ENCODE measurements at regions of chr9 and their contacts with region 1.

Region 1: DNA sequence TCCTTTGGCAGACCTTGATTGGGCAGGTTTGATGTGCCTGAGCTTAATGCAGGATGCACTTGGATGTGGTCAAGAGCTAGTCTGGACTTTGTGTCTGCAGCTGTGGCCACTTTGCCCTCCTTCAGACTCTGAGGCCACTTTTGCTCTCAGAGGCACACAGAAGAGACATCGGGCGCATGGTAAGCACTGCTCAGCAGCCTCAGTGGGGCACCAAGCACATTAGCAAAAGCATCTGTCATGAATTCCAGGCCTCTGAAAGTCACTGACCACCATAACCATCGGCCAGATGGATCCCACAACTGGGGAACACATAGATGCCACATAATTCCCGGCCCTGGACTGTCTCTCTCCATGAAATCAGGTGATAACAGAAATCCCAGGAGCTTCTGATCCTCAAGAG is 34.3 kb upstream of the ZNF782 start:
- DNase-seq: no peak
- ATAC-seq: no peak
- H3K4me3 ChIP-seq: no peak overlapping the region
- H3K4me3 Mint-ChIP-seq: no peak overlapping the region
- H3K27ac ChIP-seq: no peak overlapping the region
- H3K27ac Mint-ChIP-seq: no peak overlapping the region
- H3K4me1 ChIP-seq: no peaks in the 10 kb centered on the region
- H3K4me1 Mint-ChIP-seq: no peaks in the 10 kb centered on the region
- H3K27me3 ChIP-seq: no peaks in the 10 kb centered on the region
- H3K27me3 Mint-ChIP-seq: no peaks in the 10 kb centered on the region
- CTCF ChIP-seq: no peak

Region 2: GRCh38 chr9:96751815-96752214 is 136.8 kb before region 1 on chr9:
- CTCF ChIA-PET with region 1: no interaction called
- POLR2A ChIA-PET with region 1: no interaction called
- intact Hi-C with region 1: no loop called
- DNase-seq: no peak
- ATAC-seq: no peak
- H3K4me3 ChIP-seq: no peak overlapping the region
- H3K4me3 Mint-ChIP-seq: no peak overlapping the region
- H3K27ac ChIP-seq: no peak overlapping the region
- H3K27ac Mint-ChIP-seq: no peak overlapping the region
- H3K4me1 ChIP-seq: no peaks in the 10 kb centered on the region
- H3K4me1 Mint-ChIP-seq: no peaks in the 10 kb centered on the region
- H3K27me3 ChIP-seq: no peaks in the 10 kb centered on the region
- H3K27me3 Mint-ChIP-seq: no peaks in the 10 kb centered on the region
- CTCF ChIP-seq: no peak

Region 3: DNA sequence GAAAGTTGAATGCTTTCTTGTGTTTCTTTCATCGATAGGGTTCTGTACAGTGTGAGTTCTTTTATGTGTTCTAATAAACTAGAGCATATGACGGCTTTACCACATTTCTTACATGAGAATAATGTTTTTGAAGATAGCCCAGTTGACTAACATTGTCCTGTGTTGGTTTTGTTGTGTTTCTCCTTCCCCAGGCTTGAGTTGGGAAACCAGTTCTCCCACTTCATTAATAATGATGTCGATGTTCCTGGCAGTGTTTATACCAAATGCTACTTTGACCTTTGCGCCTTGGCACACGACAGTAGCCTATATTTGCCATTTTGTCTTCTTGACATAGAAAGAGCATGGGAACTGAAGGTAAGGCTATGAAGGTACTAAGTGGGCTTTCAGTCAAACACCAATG is 19.9 kb before region 1 on chr9:
- CTCF ChIA-PET with region 1: no interaction called
- POLR2A ChIA-PET with region 1: interaction called, 4 read pairs
- intact Hi-C with region 1: loop called in 1 of 2 experiments (anchors 2 kb)
- DNase-seq: no peak
- ATAC-seq: no peak
- H3K4me3 ChIP-seq: no peak overlapping the region
- H3K4me3 Mint-ChIP-seq: no peak overlapping the region
- H3K27ac ChIP-seq: no peak overlapping the region
- H3K27ac Mint-ChIP-seq: no peak overlapping the region
- H3K4me1 ChIP-seq: no peaks in the 10 kb centered on the region
- H3K4me1 Mint-ChIP-seq: peaks cover 1% of the 10 kb centered on the region
- H3K27me3 ChIP-seq: no peaks in the 10 kb centered on the region
- H3K27me3 Mint-ChIP-seq: peaks cover 22% of the 10 kb centered on the region
- CTCF ChIP-seq: no peak

Region 4: GRCh38 chr9:97419309-97419867 is 530.8 kb after region 1 on chr9:
- CTCF ChIA-PET with region 1: no interaction called
- POLR2A ChIA-PET with region 1: no interaction called
- intact Hi-C with region 1: no loop called
- DNase-seq: no peak
- ATAC-seq: no peak
- H3K4me3 ChIP-seq: no peak overlapping the region
- H3K4me3 Mint-ChIP-seq: no peak overlapping the region
- H3K27ac ChIP-seq: no peak overlapping the region
- H3K27ac Mint-ChIP-seq: no peak overlapping the region
- H3K4me1 ChIP-seq: no peaks in the 10 kb centered on the region
- H3K4me1 Mint-ChIP-seq: peaks cover 22% of the 10 kb centered on the region
- H3K27me3 ChIP-seq: no peaks in the 10 kb centered on the region
- H3K27me3 Mint-ChIP-seq: no peaks in the 10 kb centered on the region
- CTCF ChIP-seq: no peak